ENCODE measurements at regions of chr7 and their contacts with region 1.

Region 1: DNA sequence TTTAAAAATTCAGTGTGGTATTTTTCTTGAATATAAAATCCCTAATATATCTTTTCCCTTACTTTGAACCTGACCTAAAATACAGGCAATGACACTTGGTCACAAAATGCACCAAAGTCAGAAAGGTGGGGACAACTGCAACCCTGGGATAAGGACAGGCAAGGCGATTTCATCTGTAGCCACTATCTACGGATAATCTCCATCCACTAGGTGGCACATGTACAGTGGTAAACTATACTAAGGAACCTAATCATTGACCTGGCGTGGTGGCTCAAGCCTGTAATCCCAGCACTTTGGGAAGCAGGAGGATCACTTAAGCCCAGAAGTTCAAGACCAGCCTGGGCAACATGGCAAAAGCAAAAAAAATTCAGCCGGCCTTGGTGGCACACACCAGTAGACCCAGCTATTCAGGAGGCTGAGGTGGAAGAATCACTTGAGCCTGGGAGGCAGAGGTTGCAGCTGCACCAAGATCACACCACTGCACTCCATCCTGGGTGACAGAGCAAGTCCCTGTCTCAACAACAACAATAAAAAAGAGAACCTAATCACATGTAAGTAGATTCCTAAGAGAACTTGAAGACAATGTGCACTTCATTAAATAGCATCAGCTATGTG is 98.9 kb downstream of the KMT2C start:
- DNase-seq: peak in 7 of 14 experiments; percentile 3 to 67 (median 34)
- ATAC-seq: peak; percentile 71
- H3K4me3 ChIP-seq: no peak overlapping the region
- H3K4me3 Mint-ChIP-seq: peak overlapping the region; percentile 74
- H3K27ac ChIP-seq: peak overlapping the region in 1 of 2 donors; percentile 16
- H3K27ac Mint-ChIP-seq: peak overlapping the region; percentile 57
- H3K4me1 ChIP-seq: peaks cover 21% of the 10 kb centered on the region
- H3K4me1 Mint-ChIP-seq: peaks cover 80% of the 10 kb centered on the region
- H3K27me3 ChIP-seq: no peaks in the 10 kb centered on the region
- H3K27me3 Mint-ChIP-seq: no peaks in the 10 kb centered on the region
- CTCF ChIP-seq: peak; percentile 69

Region 2: DNA sequence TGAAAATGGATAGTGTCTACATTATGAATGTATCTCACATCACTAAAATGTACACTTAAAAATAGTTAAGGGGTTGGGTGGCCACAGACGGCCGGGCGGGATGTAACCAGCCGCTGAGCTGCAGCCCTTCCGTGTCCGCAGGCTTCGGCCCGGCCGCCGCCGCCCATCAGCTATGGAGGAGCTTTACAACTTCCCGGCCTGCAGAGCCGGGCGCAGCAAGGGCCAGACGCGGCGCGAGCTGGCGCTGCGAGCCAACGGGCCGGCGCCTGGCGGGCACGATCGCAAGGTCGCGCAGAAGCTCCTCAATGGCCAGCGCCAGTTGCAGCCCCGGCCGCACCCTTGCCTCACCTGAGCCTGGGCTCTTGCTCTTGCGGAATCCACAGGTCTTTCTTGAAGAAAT is 29.8 kb after region 1 on chr7:
- CTCF ChIA-PET with region 1: no interaction called
- POLR2A ChIA-PET with region 1: no interaction called
- intact Hi-C with region 1: no loop called
- DNase-seq: peak in 1 of 14 experiments; percentile 18
- ATAC-seq: no peak
- H3K4me3 ChIP-seq: no peak overlapping the region
- H3K4me3 Mint-ChIP-seq: peak overlapping the region; percentile 31
- H3K27ac ChIP-seq: no peak overlapping the region
- H3K27ac Mint-ChIP-seq: no peak overlapping the region
- H3K4me1 ChIP-seq: peaks cover 18% of the 10 kb centered on the region
- H3K4me1 Mint-ChIP-seq: peaks cover 79% of the 10 kb centered on the region
- H3K27me3 ChIP-seq: no peaks in the 10 kb centered on the region
- H3K27me3 Mint-ChIP-seq: no peaks in the 10 kb centered on the region
- CTCF ChIP-seq: no peak

Region 3: GRCh38 chr7:152383341-152384234 is 46.7 kb after region 1 on chr7:
- CTCF ChIA-PET with region 1: no interaction called
- POLR2A ChIA-PET with region 1: no interaction called
- intact Hi-C with region 1: loop called in 1 of 2 experiments (anchors 1 kb)
- DNase-seq: peak in 1 of 14 experiments; percentile 26
- ATAC-seq: no peak
- H3K4me3 ChIP-seq: no peak overlapping the region
- H3K4me3 Mint-ChIP-seq: no peak overlapping the region
- H3K27ac ChIP-seq: no peak overlapping the region
- H3K27ac Mint-ChIP-seq: no peak overlapping the region
- H3K4me1 ChIP-seq: peaks cover 9% of the 10 kb centered on the region
- H3K4me1 Mint-ChIP-seq: peaks cover 28% of the 10 kb centered on the region
- H3K27me3 ChIP-seq: no peaks in the 10 kb centered on the region
- H3K27me3 Mint-ChIP-seq: no peaks in the 10 kb centered on the region
- CTCF ChIP-seq: no peak

Region 4: DNA sequence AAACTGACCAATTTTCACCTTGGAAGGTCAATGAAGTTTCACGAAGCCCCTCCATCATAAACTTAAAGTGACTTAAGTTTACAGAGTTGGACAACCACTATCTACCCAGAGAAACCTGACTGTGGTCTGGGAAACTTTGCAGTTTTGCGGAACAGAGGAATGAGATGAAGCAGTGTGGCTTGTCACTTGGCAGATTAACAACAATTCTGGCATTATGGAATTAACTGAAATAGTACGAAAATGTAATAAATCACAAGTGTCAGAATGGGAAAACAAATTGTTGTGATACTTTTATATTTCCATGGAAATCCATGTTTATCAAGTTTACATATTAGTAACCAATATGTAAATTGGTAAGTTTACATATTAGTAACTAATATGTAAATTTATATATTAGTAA is 94.0 kb after region 1 on chr7:
- CTCF ChIA-PET with region 1: interaction called, 3 read pairs
- POLR2A ChIA-PET with region 1: interaction called, 4 read pairs
- intact Hi-C with region 1: loop called in 1 of 2 experiments (anchors 5 kb)
- DNase-seq: no peak
- ATAC-seq: no peak
- H3K4me3 ChIP-seq: no peak overlapping the region
- H3K4me3 Mint-ChIP-seq: peak overlapping the region; percentile 62
- H3K27ac ChIP-seq: no peak overlapping the region
- H3K27ac Mint-ChIP-seq: no peak overlapping the region
- H3K4me1 ChIP-seq: peaks cover 31% of the 10 kb centered on the region
- H3K4me1 Mint-ChIP-seq: peaks cover 56% of the 10 kb centered on the region
- H3K27me3 ChIP-seq: no peaks in the 10 kb centered on the region
- H3K27me3 Mint-ChIP-seq: no peaks in the 10 kb centered on the region
- CTCF ChIP-seq: no peak

Region 5: DNA sequence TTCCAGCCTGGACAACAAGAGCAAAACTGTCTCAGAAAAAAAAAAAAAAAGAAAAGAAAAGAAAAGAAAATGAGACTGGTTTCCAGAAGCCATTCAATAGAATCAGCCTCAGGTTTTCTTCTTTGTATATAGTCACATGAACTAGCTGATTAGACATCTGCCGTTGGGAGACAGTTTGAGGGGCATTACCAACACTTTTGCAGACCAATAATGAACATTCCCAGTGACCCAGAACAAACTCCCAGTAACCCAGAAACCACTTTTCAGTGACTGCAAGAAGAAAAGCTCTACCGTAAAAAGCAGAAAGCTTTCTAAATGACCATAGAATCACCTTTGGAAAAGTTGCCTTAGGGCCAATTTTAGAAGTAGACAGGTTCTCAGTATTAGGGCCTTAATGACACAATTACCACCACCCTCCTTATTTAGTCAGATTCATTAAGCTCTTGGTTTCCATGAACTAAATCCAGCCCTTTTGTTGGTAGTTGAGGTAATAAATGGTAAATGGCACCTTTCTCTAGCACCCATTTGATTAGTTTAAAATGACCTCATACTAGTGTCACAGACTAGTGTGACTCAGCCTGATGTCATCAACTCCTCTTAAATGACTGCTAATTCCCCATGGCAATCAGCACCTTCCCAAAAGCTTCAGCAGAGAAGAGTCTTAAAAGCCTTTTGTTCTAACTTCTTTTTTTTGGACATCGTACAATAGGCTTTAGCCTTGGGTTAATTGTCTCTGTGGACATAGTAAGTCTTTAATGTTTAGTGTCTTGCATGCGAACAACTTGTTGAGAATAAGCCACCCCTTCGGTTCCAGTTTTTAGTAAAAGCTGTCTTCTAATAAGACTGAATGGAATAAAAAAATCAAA is 372.7 kb after region 1 on chr7:
- CTCF ChIA-PET with region 1: interaction called, 15 read pairs
- POLR2A ChIA-PET with region 1: no interaction called
- intact Hi-C with region 1: loop called (anchors 1 kb)
- DNase-seq: no peak
- ATAC-seq: no peak
- H3K4me3 ChIP-seq: no peak overlapping the region
- H3K4me3 Mint-ChIP-seq: no peak overlapping the region
- H3K27ac ChIP-seq: no peak overlapping the region
- H3K27ac Mint-ChIP-seq: no peak overlapping the region
- H3K4me1 ChIP-seq: no peaks in the 10 kb centered on the region
- H3K4me1 Mint-ChIP-seq: no peaks in the 10 kb centered on the region
- H3K27me3 ChIP-seq: no peaks in the 10 kb centered on the region
- H3K27me3 Mint-ChIP-seq: peaks cover 11% of the 10 kb centered on the region
- CTCF ChIP-seq: no peak